Calu3 (cell line): ENCODE measurements at regions of chr15 and their contacts with region 1.

Region 1: GRCh38 chr15:53791581-53791980 is 32.1 kb upstream of the WDR72 start:
- DNase-seq: peak; percentile 54
- H3K4me3 Mint-ChIP-seq: peak overlapping the region; percentile 22
- H3K27ac Mint-ChIP-seq: peak overlapping the region; percentile 62
- H3K4me1 Mint-ChIP-seq: peaks cover 40% of the 10 kb centered on the region
- H3K27me3 Mint-ChIP-seq: no peaks in the 10 kb centered on the region
- CTCF ChIP-seq: no peak

Region 2: GRCh38 chr15:53739651-53740050 is 51.9 kb before region 1 on chr15:
- CTCF ChIA-PET with region 1: no interaction called
- intact Hi-C with region 1: loop called (anchors 5 kb)
- DNase-seq: peak; percentile 27
- H3K4me3 Mint-ChIP-seq: peak overlapping the region; percentile 56
- H3K27ac Mint-ChIP-seq: peak overlapping the region; percentile 57
- H3K4me1 Mint-ChIP-seq: peaks cover 21% of the 10 kb centered on the region
- H3K27me3 Mint-ChIP-seq: no peaks in the 10 kb centered on the region
- CTCF ChIP-seq: no peak

Region 3: DNA sequence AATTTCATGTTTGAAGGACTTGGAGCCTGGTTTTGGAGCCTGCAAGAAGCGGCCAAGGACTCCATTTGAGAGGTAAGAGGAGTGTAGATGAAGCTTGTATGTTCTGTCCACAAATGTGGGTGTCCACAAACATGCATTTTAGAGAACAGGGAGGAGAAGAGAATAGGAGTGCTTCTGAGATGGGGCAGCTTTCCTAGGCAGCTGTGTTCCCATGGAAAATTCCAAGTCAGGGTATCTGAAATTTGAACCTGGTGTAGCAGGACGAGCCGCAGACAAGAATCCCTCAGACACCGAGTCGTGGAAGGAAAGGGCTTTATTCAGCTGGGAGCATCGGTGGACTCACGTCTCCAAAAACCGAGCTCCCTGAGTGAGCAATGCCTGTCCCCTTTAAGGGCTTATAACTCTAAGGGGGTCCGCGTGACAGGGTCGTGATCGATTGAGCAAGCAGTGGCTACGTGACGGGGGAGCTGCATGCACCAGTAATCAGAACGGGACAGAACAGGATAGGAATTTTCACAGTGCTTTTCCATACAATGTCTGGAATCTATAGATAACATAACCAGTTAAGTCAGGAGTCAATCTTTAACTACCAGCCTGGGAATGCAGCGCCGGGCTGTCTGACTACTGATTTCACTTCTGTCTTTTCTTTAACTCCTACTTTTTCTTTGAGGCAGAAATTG is 39.3 kb after region 1 on chr15:
- CTCF ChIA-PET with region 1: no interaction called
- intact Hi-C with region 1: no loop called
- DNase-seq: peak; percentile 41
- H3K4me3 Mint-ChIP-seq: peak overlapping the region; percentile 59
- H3K27ac Mint-ChIP-seq: peak overlapping the region; percentile 71
- H3K4me1 Mint-ChIP-seq: peaks cover 57% of the 10 kb centered on the region
- H3K27me3 Mint-ChIP-seq: no peaks in the 10 kb centered on the region
- CTCF ChIP-seq: no peak

Region 4: DNA sequence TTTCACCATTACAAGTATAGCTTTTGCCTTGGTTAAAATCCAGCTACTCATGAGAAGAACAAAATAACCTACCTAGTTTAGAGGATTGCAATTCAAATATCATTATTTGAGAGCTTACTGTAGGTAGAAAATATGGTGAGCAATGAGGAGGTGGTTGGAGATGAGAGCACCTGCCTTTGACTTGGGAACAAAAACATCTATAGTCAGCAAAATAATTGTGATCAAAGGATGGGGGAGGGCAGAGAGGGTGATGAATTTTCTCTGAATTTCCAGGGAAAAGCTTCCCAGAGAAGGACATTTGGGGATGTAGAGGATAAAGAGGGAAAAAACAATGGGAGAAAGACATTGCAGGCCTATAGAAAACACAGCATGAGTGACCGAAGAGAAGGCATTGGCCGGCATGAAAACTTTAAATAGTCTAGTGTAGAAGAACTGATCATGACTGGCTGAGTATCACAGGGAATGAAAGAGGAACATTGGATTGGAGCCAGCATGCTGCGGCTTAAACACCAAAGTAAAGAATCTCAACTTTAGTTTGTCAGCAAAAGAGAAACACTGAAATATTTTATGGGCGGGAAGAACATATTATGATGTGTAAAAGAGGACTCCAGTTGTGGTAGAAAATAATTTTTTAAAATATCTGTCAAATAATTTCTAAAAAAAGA is 768.0 kb after region 1 on chr15:
- CTCF ChIA-PET with region 1: no interaction called
- intact Hi-C with region 1: no loop called
- DNase-seq: no peak
- H3K4me3 Mint-ChIP-seq: no peak overlapping the region
- H3K27ac Mint-ChIP-seq: no peak overlapping the region
- H3K4me1 Mint-ChIP-seq: no peaks in the 10 kb centered on the region
- H3K27me3 Mint-ChIP-seq: no peaks in the 10 kb centered on the region
- CTCF ChIP-seq: no peak